ENCODE measurements at regions of chr4 and their contacts with region 1.

Region 1: GRCh38 chr4:154779362-154779947 is 1.6 kb upstream of the RBM46 start:
- DNase-seq: no peak
- ATAC-seq: no peak
- H3K4me3 ChIP-seq: no peak overlapping the region
- H3K27ac ChIP-seq: no peak overlapping the region
- H3K4me1 ChIP-seq: no peaks in the 10 kb centered on the region
- H3K27me3 ChIP-seq: peaks cover 0 to 10% of the 10 kb centered on the region in 2 donors
- CTCF ChIP-seq: peak; percentile 24 to 78 (median 70)
- POLR2A ChIP-seq: no peak

Region 2: GRCh38 chr4:154551872-154552686 is 227.4 kb before region 1 on chr4:
- intact Hi-C with region 1: loop called (anchors 10 kb)
- DNase-seq: peak; percentile 82 to 86 (median 84)
- ATAC-seq: peak; percentile 81
- H3K4me3 ChIP-seq: no peak overlapping the region
- H3K27ac ChIP-seq: no peak overlapping the region
- H3K4me1 ChIP-seq: peaks cover 12% of the 10 kb centered on the region
- H3K27me3 ChIP-seq: no peaks in the 10 kb centered on the region
- CTCF ChIP-seq: peak; percentile 64 to 89 (median 84)
- POLR2A ChIP-seq: no peak

Region 3: GRCh38 chr4:154634058-154634457 is 145.4 kb before region 1 on chr4:
- intact Hi-C with region 1: loop called (anchors 10 kb)
- DNase-seq: no peak
- ATAC-seq: no peak
- H3K4me3 ChIP-seq: no peak overlapping the region
- H3K27ac ChIP-seq: no peak overlapping the region
- H3K4me1 ChIP-seq: no peaks in the 10 kb centered on the region
- H3K27me3 ChIP-seq: peaks cover 0 to 6% of the 10 kb centered on the region in 2 donors
- CTCF ChIP-seq: no peak
- POLR2A ChIP-seq: no peak